ENCODE measurements at regions of chr1 and their contacts with region 1.

Region 1: GRCh38 chr1:184805667-184806295 is 51.1 kb upstream of the EDEM3 start:
- DNase-seq: peak; percentile 85 to 94 (median 88)
- ATAC-seq: peak; percentile 98
- H3K4me3 ChIP-seq: no peak overlapping the region
- H3K27ac ChIP-seq: peak overlapping the region; percentile 36; the same call in 1 of the 3 replicates
- H3K4me1 ChIP-seq: peaks cover 10 to 11% of the 10 kb centered on the region in 2 experiments; a peak in 4 of 5 replicates
- H3K27me3 ChIP-seq: no peaks in the 10 kb centered on the region
- CTCF ChIP-seq: peak; percentile 91 to 98 (median 95)
- EP300 ChIP-seq: no peak
- POLR2A ChIP-seq: no peak
- RAD21 ChIP-seq: peak; percentile 93 to 97

Region 2: DNA sequence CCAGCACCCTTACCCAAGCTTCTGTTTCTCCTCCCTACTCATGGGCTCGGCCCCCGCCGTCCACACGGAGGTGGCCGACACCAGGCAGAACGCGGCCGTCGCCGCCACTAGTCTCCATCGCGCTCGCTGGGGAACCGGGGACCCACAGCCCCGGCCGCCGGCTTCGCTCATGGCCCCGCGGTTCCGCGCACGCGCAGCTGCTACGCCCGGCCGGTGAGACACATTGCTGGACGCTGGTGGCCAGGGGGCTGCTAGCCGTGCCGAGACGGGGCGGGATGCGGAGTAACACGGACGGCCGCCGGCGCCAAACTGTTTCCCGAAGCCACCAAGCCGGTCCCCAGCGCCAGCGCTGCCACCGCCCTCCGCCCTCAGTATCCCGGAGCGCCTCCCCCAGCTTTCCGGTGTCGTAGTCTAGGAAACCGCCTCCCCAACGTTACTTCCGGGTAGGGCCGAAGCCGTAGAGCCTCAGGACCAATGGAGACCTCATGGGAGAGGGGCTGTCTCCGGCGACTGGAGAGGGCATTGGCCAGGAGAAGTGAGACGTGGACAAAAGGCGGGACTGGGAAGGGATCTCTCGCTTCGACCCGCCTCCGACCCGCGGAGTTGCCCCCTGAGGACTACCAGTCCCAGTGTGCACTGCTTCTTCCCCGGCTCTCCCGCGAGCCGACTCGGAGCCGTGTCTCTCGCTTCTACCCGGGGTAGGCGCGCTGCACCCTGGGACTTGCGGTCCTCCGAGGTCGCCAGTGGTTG is 51.1 kb before region 1 on chr1 and contains the start of gene EDEM3:
- CTCF ChIA-PET with region 1: no interaction called
- POLR2A ChIA-PET with region 1: interaction called, 3 read pairs
- in situ Hi-C with region 1: no loop called
- intact Hi-C with region 1: loop called (anchors 1 kb)
- DNase-seq: peak; percentile 97 to 100 (median 98)
- ATAC-seq: peak; percentile 93
- H3K4me3 ChIP-seq: peak within 1 kb of the TSS; percentile 83
- H3K27ac ChIP-seq: peak within 1 kb of the TSS; percentile 80
- H3K4me1 ChIP-seq: peaks cover 4 to 11% of the 10 kb centered on the region in 2 experiments; a peak in 3 of 5 replicates
- H3K27me3 ChIP-seq: no peaks in the 10 kb centered on the region
- CTCF ChIP-seq: peak in 1 of 3 experiments; percentile 0; a peak in 1 of 6 replicates
- EP300 ChIP-seq: no peak
- POLR2A ChIP-seq: peak; percentile 92
- RAD21 ChIP-seq: peak in 1 of 2 experiments; percentile 18; a peak in 1 of 4 replicates
- polyA plus RNA-seq, gene EDEM3: 15.8 to 18.5 TPM

Region 3: GRCh38 chr1:184973272-184974055 is 167.7 kb after region 1 on chr1:
- CTCF ChIA-PET with region 1: no interaction called
- POLR2A ChIA-PET with region 1: interaction called, 30 read pairs
- in situ Hi-C with region 1: no loop called
- intact Hi-C with region 1: no loop called
- DNase-seq: peak in 3 of 4 experiments; percentile 28 to 79 (median 66)
- ATAC-seq: peak; percentile 83
- H3K4me3 ChIP-seq: peak overlapping the region; percentile 75
- H3K27ac ChIP-seq: peak overlapping the region; percentile 92
- H3K4me1 ChIP-seq: peaks cover 13 to 18% of the 10 kb centered on the region in 2 experiments; a peak in 4 of 5 replicates
- H3K27me3 ChIP-seq: no peaks in the 10 kb centered on the region
- CTCF ChIP-seq: no peak
- EP300 ChIP-seq: peak; percentile 90
- POLR2A ChIP-seq: peak; percentile 77
- RAD21 ChIP-seq: no peak; a peak in 1 of 4 replicates

Region 4: GRCh38 chr1:185044981-185045813 is 239.4 kb after region 1 on chr1 and contains the start of gene RNF2:
- CTCF ChIA-PET with region 1: no interaction called
- POLR2A ChIA-PET with region 1: interaction called, 3 read pairs
- in situ Hi-C with region 1: no loop called
- intact Hi-C with region 1: loop called (anchors 5 kb)
- DNase-seq: peak; percentile 92 to 94 (median 94)
- ATAC-seq: peak; percentile 94
- H3K4me3 ChIP-seq: peak within 1 kb of the TSS; percentile 85
- H3K27ac ChIP-seq: peak within 1 kb of the TSS; percentile 85
- H3K4me1 ChIP-seq: peaks cover 21 to 25% of the 10 kb centered on the region in 2 experiments
- H3K27me3 ChIP-seq: no peaks in the 10 kb centered on the region
- CTCF ChIP-seq: peak in 1 of 3 experiments; percentile 40; a peak in 1 of 6 replicates
- EP300 ChIP-seq: no peak
- POLR2A ChIP-seq: peak; percentile 79
- RAD21 ChIP-seq: peak in 1 of 2 experiments; percentile 45; a peak in 3 of 4 replicates
- polyA plus RNA-seq, gene RNF2: 7.1 to 7.9 TPM

Region 5: DNA sequence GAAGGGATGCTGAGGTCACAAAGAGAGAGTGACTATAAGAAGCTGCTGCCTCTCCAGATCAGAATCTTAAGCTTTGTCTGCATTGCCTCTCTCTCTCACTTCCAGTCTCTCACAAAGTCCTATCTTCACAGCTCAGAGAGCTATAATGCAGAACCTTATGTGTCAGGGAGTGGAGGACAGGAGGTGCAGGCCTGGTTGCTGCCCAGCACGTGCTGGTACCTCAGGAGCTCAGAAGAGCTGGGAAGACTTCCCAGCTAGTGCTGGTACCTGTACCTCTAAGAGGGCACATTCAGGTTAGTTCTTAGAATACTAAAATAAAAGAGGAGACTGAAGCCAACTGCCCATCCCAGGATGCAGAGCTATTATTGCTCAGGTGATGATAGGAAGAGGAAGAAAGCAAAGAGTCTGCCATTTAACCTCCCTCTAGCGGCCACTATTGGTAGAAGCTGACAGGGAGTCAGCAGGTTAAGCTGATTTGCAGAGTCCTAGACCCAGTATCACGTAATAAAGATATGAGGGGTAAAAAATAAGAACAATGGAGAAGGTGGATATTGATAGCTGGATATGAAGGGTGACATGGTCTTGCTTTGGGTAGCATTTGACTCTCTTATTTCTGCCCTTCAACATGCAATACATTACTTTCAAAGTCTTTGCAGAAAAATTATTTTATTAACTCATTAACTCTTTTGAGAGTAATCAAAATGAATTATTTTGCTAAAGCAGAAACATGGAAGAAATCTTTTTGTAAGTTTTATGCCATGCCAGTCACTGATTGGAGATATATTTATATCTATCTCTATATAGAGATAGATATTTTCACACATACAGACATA is 790.3 kb after region 1 on chr1:
- CTCF ChIA-PET with region 1: no interaction called
- POLR2A ChIA-PET with region 1: no interaction called
- in situ Hi-C with region 1: no loop called
- intact Hi-C with region 1: no loop called
- DNase-seq: peak; percentile 67 to 73 (median 68)
- ATAC-seq: peak; percentile 98
- H3K4me3 ChIP-seq: no peak overlapping the region
- H3K27ac ChIP-seq: no peak overlapping the region
- H3K4me1 ChIP-seq: no peaks in the 10 kb centered on the region
- H3K27me3 ChIP-seq: no peaks in the 10 kb centered on the region
- CTCF ChIP-seq: peak; percentile 67 to 84 (median 70)
- EP300 ChIP-seq: no peak
- POLR2A ChIP-seq: no peak
- RAD21 ChIP-seq: peak; percentile 52 to 74

Region 6: GRCh38 chr1:185681034-185681633 is 875.4 kb after region 1 on chr1:
- CTCF ChIA-PET with region 1: interaction called, 5 read pairs
- POLR2A ChIA-PET with region 1: no interaction called
- in situ Hi-C with region 1: no loop called
- intact Hi-C with region 1: loop called (anchors 5 kb)
- DNase-seq: peak in 2 of 4 experiments; percentile 43 to 66
- ATAC-seq: peak; percentile 94
- H3K4me3 ChIP-seq: no peak overlapping the region
- H3K27ac ChIP-seq: no peak overlapping the region
- H3K4me1 ChIP-seq: no peaks in the 10 kb centered on the region
- H3K27me3 ChIP-seq: no peaks in the 10 kb centered on the region; a peak in 1 of 5 replicates
- CTCF ChIP-seq: peak; percentile 54 to 72 (median 60)
- EP300 ChIP-seq: no peak
- POLR2A ChIP-seq: no peak
- RAD21 ChIP-seq: peak; percentile 83 to 84

Measured in K562 (cell line).